ENCODE measurements at regions of chr1 and their contacts with region 1.

Region 1: GRCh38 chr1:58783993-58784757 is at the start of gene JUN:
- DNase-seq: peak; percentile 98 to 100 (median 99)

Region 2: GRCh38 chr1:58652651-58653184 is 131.5 kb before region 1 on chr1:
- intact Hi-C with region 1: no loop called
- DNase-seq: peak in 8 of 10 donors; percentile 32 to 91 (median 65)

Region 3: GRCh38 chr1:58816072-58816746 is 32.0 kb after region 1 on chr1:
- intact Hi-C with region 1: loop called (anchors 2 kb)
- DNase-seq: peak; percentile 74 to 97 (median 83)

Region 4: DNA sequence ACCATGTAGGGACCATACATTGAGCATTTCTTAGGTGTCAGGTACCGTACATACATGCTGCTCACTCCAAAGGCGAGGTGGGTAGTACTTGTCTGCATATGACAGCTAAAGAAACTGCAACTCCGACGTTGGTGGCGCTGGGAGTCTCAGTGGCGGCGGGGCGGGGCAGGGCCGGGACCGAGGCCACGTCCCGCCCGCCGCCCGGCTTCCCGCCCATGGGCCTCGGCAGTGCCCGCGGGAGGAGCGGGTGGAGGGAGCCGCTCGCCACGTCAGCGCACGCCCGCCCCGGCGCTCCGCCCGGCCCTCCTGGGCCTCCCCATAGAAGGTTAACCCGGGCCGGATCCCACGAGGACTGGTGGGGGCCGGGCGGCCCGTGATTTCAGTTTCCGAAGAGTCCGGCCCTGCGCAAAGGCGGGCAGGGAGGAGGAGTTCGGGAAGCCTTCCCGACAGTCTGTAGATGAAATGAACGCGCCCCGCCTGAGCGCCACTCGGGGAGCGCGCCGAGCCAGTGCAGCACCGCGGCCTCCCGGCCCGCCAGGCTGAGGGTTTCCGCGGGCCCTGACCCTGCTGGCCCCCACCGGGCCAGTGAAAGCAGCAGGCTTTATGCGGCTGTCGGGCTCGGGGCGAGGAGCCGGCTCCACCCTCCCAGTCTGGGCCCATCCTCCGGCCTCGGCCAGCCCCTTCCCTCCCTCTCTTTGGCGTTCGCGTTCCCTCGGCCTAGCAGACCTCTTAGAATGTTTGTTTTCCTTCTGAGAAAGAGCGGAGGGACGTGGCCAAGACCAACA is 119.5 kb after region 1 on chr1:
- intact Hi-C with region 1: loop called (anchors 2 kb)
- DNase-seq: peak; percentile 74 to 97 (median 82)

Region 5: DNA sequence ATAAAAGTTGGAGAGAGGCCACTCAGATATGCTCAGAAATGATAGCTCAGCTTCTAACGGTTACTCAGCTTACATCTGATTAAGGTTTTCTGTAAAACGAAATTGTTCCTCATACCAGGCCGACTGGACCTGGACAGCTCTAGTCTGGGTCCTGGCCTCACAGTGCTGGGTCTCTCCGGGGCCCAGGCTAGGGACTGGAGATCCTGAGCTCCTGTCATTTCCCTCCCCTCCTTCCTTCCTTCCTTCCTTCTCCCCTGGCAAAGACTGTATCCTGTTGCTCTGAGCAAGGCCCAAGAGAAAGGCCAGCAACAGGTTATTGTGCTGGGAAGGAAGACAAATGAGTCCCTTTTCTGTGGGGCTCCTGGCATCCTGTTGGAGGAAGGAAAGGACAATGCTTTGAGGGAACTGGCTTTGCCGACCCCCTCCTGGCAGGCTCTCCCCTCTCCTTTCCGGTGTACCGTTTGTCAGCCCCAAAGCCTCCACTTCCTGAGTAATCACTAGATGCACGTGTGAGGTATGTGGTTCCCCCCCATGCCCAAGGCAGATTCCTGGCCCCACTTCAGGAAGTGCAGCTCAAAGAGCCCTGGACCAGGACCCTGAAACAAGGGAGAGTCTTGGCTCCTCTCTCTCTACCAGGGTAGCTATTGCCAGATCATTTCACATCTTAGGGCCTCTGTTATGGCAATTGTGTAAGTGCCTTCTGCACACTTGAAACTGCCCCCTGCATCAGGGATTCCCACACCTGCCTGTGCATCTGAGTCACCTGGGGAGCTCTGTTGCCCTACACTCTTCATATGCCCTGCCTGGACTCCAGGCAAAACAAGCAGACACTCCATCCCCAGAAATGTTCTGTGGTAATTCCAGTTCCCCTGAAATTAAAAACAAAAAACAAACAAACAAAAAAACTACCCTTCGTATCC is 300.0 kb after region 1 on chr1:
- intact Hi-C with region 1: loop called (anchors 5 kb)
- DNase-seq: no peak

Region 6: DNA sequence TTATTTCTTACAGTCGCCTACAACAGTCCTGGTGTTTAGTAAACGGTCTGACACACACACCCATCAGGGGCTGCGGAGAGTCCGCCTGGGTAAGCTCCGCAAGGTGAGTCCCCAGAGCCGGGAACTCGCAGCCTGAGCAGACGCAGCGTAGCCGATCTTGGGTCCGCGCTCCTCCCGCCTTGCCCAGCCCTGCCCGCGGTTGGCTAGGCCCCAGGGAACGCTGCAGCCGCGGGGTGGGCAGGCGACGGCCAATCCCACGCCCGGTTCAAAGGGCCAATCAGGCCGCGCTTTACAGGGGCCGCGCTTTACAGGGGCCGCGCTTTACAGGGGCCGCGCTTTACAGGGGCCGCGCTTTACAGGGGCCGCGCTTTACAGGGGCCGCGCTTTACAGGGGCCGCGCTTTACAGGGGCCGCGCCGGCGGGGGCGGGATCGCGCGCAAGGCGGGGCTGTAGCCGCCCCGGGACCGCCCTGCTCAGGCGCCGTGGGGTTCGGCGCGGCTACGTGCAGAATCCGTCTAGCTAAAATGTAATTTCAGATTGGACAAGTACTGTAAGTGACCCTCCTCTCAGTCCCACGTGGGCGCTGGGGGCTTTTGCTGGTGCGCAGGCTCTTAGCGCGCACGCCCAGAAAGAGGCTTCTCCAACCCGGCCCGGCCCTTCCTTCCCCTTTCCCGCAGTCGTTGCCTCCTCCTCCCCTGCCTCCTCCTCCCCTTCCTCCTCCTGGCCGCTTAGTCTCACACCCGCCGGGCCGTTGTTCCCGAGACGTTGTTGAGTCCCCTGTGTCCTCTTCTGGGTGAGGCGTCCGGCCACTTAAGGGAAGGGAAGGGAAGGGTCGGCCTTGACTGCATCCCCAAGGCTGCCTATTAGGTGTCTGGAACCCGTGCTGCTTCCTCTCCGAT is 512.4 kb after region 1 on chr1 and contains the start of gene FGGY:
- intact Hi-C with region 1: loop called (anchors 1 kb)
- DNase-seq: peak; percentile 84 to 99 (median 93)

Region 7: DNA sequence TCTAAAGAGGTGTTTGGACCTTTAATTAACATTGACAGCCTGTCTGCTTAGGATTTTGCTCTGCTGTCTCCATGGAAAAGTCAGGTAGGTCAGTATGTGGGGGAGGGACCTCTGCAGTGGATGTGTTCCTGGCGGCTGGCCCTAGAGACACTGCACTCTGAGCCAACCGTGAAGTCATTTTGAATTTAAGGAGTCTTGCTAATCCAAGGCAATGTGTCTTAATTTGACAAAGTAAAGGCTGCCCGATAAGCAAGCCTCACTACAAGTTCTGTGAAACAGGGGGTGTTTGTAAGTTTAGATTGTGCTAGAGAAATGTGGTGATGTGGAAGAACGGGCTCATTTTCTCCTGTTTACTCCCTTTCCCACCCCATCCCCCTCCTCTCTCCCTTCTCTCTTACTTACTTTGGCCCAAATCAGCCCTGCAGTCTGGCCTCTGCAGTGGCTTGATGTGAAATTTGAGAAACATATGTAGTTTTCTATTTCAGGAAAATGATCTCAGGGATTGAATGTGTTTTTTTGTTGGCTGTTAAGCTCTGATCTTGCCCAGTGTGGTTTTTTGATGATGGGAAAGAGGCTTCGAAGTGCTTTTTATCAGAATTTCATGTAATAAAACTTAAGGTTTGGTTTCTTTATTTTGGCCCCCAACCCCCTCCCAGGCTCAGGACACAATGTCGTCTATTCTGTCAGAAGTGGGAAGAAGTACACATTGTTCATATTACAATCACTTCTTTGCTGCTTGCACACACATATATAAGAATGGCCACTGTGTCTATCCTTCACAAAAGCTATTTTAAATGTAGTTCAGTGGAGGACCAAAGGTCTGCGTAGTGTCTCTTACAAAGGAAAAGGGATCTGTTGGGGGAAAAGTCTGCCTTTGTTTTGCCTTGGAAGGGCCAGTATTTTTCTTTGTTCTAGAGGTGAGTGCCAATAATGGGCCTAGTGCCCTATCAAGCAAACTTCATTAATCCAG is 609.3 kb after region 1 on chr1:
- intact Hi-C with region 1: loop called (anchors 10 kb)
- DNase-seq: peak in 6 of 10 donors; percentile 12 to 79 (median 54)

Region 8: GRCh38 chr1:59759156-59759925 is 975.2 kb after region 1 on chr1:
- intact Hi-C with region 1: loop called (anchors 5 kb)
- DNase-seq: peak; percentile 68 to 98 (median 83)

Measured in posterior cingulate gyrus (tissue), 11 donors.